B cell (primary cell): ENCODE measurements at regions of chr18 and their contacts with region 1.

Region 1: DNA sequence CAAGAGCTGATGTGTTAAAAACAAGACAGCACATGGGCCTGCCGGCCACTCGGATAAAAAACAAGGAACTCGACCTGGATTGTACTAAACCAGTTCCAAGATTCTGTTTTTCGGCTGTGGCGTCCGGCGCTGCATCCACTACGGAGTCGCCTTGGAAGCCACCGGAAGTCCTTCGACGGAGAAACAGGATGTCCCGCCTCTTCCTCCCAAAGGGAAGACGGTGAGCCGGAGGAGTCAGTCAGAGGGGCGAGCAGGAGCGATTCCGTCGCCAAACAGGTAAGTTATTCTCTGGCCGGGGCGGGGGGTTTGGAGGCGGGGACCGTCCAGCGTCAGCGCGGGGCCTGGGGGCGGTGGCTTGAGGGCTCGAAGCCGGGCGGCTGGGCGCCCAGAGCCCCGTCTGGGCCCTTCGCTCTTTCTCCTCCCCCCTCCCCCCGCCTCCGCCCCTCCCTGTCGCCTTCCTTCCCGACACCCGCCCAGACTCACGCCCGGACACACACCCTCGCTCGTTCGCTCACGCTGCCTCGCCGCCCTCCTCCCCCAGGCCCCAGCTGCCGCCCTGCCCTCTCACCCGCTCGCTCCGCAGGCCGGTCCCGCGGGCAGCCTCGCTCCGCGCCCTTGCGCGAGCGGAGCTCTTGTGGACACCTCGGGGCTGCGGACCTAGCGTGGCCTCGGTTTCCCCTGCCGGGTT is at the start of gene ZNF407:
- DNase-seq: peak; percentile 96
- ATAC-seq: peak; percentile 83
- H3K4me3 ChIP-seq: peak within 1 kb of the TSS; percentile 65 to 99 (median 86)
- H3K4me3 Mint-ChIP-seq: peak within 1 kb of the TSS; percentile 97
- H3K27ac ChIP-seq: peak within 1 kb of the TSS; percentile 88 to 96
- H3K27ac Mint-ChIP-seq: peak within 1 kb of the TSS; percentile 98
- H3K4me1 ChIP-seq: peaks cover 21 to 22% of the 10 kb centered on the region in 2 donors
- H3K4me1 Mint-ChIP-seq: peaks cover 51% of the 10 kb centered on the region
- H3K27me3 ChIP-seq: no peaks in the 10 kb centered on the region
- H3K27me3 Mint-ChIP-seq: no peaks in the 10 kb centered on the region
- CTCF ChIP-seq: no peak
- total RNA-seq, gene ZNF407: 37.1 and 37.9 TPM in 2 replicates

Region 2: GRCh38 chr18:73707035-73707434 is 890.8 kb before region 1 on chr18:
- CTCF ChIA-PET with region 1: no interaction called
- POLR2A ChIA-PET with region 1: no interaction called
- intact Hi-C with region 1: no loop called
- DNase-seq: no peak
- ATAC-seq: no peak
- H3K4me3 ChIP-seq: no peak overlapping the region
- H3K4me3 Mint-ChIP-seq: no peak overlapping the region
- H3K27ac ChIP-seq: no peak overlapping the region
- H3K27ac Mint-ChIP-seq: no peak overlapping the region
- H3K4me1 ChIP-seq: no peaks in the 10 kb centered on the region
- H3K4me1 Mint-ChIP-seq: no peaks in the 10 kb centered on the region
- H3K27me3 ChIP-seq: no peaks in the 10 kb centered on the region
- H3K27me3 Mint-ChIP-seq: no peaks in the 10 kb centered on the region
- CTCF ChIP-seq: no peak

Region 3: GRCh38 chr18:74147779-74148542 is 449.8 kb before region 1 on chr18 and contains the starts of genes FBXO15 and TIMM21:
- CTCF ChIA-PET with region 1: no interaction called
- POLR2A ChIA-PET with region 1: interaction called, 3 read pairs
- intact Hi-C with region 1: loop called (anchors 1 kb)
- DNase-seq: peak; percentile 98
- ATAC-seq: peak; percentile 84
- H3K4me3 ChIP-seq: peak within 1 kb of the TSS; percentile 75 to 99 (median 89)
- H3K4me3 Mint-ChIP-seq: peak within 1 kb of the TSS; percentile 94
- H3K27ac ChIP-seq: peak within 1 kb of the TSS; percentile 95 to 99
- H3K27ac Mint-ChIP-seq: peak within 1 kb of the TSS; percentile 100
- H3K4me1 ChIP-seq: peaks cover 15 to 21% of the 10 kb centered on the region in 2 donors
- H3K4me1 Mint-ChIP-seq: peaks cover 36% of the 10 kb centered on the region
- H3K27me3 ChIP-seq: no peaks in the 10 kb centered on the region
- H3K27me3 Mint-ChIP-seq: peaks cover 7% of the 10 kb centered on the region
- CTCF ChIP-seq: peak; percentile 1
- total RNA-seq, gene FBXO15: 3.7 and 4.1 TPM in 2 replicates
- total RNA-seq, gene TIMM21: 24.3 and 25.0 TPM in 2 replicates

Region 4: DNA sequence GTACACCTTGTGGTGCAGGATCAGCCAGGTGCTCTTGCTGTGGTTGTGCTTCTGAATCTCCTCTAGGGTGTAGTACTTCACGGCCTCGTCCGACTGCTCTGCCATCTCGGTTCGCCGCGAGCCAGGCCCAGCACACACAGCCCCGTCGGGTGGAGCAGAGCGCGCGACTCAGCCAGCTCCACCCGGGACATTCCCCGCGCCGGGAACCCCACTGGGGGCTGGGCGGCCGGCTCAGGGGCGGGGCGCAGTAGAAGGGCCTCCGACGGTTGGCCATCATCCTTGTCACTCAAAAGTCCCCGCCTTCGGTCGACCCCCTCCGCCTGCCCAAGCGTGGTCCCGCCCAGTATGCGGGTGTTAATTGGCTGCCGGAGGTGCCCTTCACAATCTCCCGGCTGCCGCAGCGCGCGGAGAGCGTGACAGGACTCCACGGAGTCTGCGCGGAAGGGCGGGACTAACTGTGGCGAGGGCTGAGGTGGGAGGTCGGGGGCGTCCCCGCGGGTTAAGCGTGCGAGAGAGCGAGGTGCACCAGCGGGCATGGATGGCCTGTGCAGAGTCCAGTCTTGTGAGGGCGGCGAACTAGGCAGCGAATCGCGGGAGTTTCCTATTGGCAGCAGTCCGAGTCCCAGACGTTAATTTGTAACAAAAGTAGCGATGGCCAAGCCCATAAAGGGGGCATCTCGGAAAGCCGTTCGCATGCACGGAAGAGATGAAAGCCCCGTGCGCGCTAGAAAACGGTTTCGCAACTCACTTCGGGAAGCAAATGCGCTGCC is 305.9 kb before region 1 on chr18 and contains the start of gene CYB5A:
- CTCF ChIA-PET with region 1: no interaction called
- POLR2A ChIA-PET with region 1: no interaction called
- intact Hi-C with region 1: loop called (anchors 1 kb)
- DNase-seq: peak; percentile 99
- ATAC-seq: peak; percentile 96
- H3K4me3 ChIP-seq: peak within 1 kb of the TSS; percentile 66 to 97 (median 85)
- H3K4me3 Mint-ChIP-seq: no peak within 1 kb of the TSS
- H3K27ac ChIP-seq: peak within 1 kb of the TSS; percentile 56 to 66
- H3K27ac Mint-ChIP-seq: peak within 1 kb of the TSS; percentile 89
- H3K4me1 ChIP-seq: peaks cover 15 to 26% of the 10 kb centered on the region in 2 donors
- H3K4me1 Mint-ChIP-seq: peaks cover 41% of the 10 kb centered on the region
- H3K27me3 ChIP-seq: no peaks in the 10 kb centered on the region
- H3K27me3 Mint-ChIP-seq: no peaks in the 10 kb centered on the region
- CTCF ChIP-seq: peak; percentile 3
- total RNA-seq, gene CYB5A: 46.4 and 46.9 TPM in 2 replicates

Region 5: DNA sequence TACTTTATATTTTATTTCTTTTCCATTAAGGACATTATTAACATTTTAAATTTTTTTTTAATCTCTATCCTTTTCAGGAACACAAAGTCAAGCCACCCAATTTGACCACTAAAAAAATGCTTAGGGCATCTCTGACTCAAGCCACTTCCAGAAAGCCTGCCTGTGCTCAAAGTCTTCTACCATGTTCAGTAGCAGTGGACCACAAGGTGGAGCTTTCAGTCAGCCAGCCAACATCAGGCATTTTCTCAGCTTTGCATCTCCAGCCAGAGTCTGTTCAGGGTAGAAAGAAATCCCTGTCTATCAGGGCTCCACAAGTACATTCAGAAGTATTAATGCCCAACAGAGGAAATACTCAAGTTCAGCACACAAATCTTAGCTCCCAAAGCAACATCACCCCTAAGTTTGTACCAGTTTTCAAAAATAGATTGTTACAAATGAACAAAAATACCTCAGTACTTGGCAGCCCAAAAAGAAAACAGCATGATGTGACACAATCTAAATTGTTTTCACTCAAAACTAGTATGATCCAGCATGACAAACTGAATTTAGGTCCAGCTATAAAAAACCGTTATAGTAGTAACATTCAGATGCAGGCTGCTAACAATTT is 244.5 kb before region 1 on chr18:
- CTCF ChIA-PET with region 1: no interaction called
- POLR2A ChIA-PET with region 1: no interaction called
- intact Hi-C with region 1: loop called (anchors 5 kb)
- DNase-seq: peak; percentile 63
- ATAC-seq: peak; percentile 49
- H3K4me3 ChIP-seq: no peak overlapping the region
- H3K4me3 Mint-ChIP-seq: no peak overlapping the region
- H3K27ac ChIP-seq: no peak overlapping the region
- H3K27ac Mint-ChIP-seq: no peak overlapping the region
- H3K4me1 ChIP-seq: peaks cover 4 to 8% of the 10 kb centered on the region in 2 donors
- H3K4me1 Mint-ChIP-seq: peaks cover 11% of the 10 kb centered on the region
- H3K27me3 ChIP-seq: no peaks in the 10 kb centered on the region
- H3K27me3 Mint-ChIP-seq: no peaks in the 10 kb centered on the region
- CTCF ChIP-seq: peak; percentile 53

Region 6: GRCh38 chr18:74760446-74760845 is 162.6 kb after region 1 on chr18:
- CTCF ChIA-PET with region 1: no interaction called
- POLR2A ChIA-PET with region 1: no interaction called
- intact Hi-C with region 1: no loop called
- DNase-seq: no peak
- ATAC-seq: no peak
- H3K4me3 ChIP-seq: no peak overlapping the region
- H3K4me3 Mint-ChIP-seq: no peak overlapping the region
- H3K27ac ChIP-seq: no peak overlapping the region
- H3K27ac Mint-ChIP-seq: no peak overlapping the region
- H3K4me1 ChIP-seq: no peaks in the 10 kb centered on the region
- H3K4me1 Mint-ChIP-seq: no peaks in the 10 kb centered on the region
- H3K27me3 ChIP-seq: no peaks in the 10 kb centered on the region
- H3K27me3 Mint-ChIP-seq: no peaks in the 10 kb centered on the region
- CTCF ChIP-seq: no peak

Region 7: GRCh38 chr18:75209129-75209950 is 611.5 kb after region 1 on chr18 and contains the start of gene PTGR3:
- CTCF ChIA-PET with region 1: no interaction called
- POLR2A ChIA-PET with region 1: no interaction called
- intact Hi-C with region 1: loop called (anchors 1 kb)
- DNase-seq: peak; percentile 81
- ATAC-seq: peak; percentile 60
- H3K4me3 ChIP-seq: peak within 1 kb of the TSS; percentile 73 to 90 (median 84)
- H3K4me3 Mint-ChIP-seq: peak within 1 kb of the TSS; percentile 98
- H3K27ac ChIP-seq: peak within 1 kb of the TSS; percentile 51 to 80
- H3K27ac Mint-ChIP-seq: peak within 1 kb of the TSS; percentile 93
- H3K4me1 ChIP-seq: peaks cover 35 to 44% of the 10 kb centered on the region in 2 donors
- H3K4me1 Mint-ChIP-seq: peaks cover 59% of the 10 kb centered on the region
- H3K27me3 ChIP-seq: peaks cover 0 to 5% (median 2%) of the 10 kb centered on the region in 4 experiments
- H3K27me3 Mint-ChIP-seq: peaks cover 21% of the 10 kb centered on the region
- CTCF ChIP-seq: no peak
- total RNA-seq, gene PTGR3: 30.2 and 32.6 TPM in 2 replicates

Region 8: GRCh38 chr18:76492669-76493212 is 1894.9 kb after region 1 on chr18:
- CTCF ChIA-PET with region 1: no interaction called
- POLR2A ChIA-PET with region 1: no interaction called
- intact Hi-C with region 1: loop called (anchors 2 kb)
- DNase-seq: peak; percentile 99
- ATAC-seq: peak; percentile 74
- H3K4me3 ChIP-seq: peak overlapping the region; percentile 62 to 97 (median 77)
- H3K4me3 Mint-ChIP-seq: peak overlapping the region; percentile 95
- H3K27ac ChIP-seq: peak overlapping the region; percentile 67 to 69
- H3K27ac Mint-ChIP-seq: peak overlapping the region; percentile 94
- H3K4me1 ChIP-seq: peaks cover 18 to 40% of the 10 kb centered on the region in 2 donors
- H3K4me1 Mint-ChIP-seq: peaks cover 56% of the 10 kb centered on the region
- H3K27me3 ChIP-seq: peaks cover 0 to 10% (median 3%) of the 10 kb centered on the region in 4 experiments
- H3K27me3 Mint-ChIP-seq: peaks cover 21% of the 10 kb centered on the region
- CTCF ChIP-seq: no peak